AG04450 (cell line): ENCODE measurements at regions of chr17 and their contacts with region 1.

Region 1: DNA sequence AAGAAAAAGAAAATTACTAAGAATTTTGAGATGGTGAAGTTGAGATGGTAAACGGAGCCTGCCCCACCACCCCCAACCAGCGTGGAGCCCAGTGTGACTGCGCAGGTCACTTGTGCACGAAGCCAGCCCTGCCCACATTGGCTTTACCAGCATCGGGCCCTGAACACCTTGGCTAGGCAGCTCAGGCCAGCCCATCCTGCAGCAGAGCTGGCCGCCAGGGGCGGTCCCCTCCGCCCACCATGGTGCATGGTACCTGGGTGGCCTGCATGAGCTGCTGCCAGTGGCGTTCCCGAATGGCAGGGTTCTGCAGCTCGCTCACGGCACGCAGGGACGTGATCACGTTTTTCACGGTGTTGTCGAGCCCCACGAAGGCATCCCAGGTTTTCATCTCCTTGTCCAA is 62.7 kb downstream of the DNAH17 start:
- DNase-seq: no peak
- H3K4me3 ChIP-seq: no peak overlapping the region
- H3K27ac ChIP-seq: no peak overlapping the region
- H3K27me3 ChIP-seq: peaks cover 3% of the 10 kb centered on the region
- CTCF ChIP-seq: no peak

Region 2: GRCh38 chr17:78903101-78903779 is 388.7 kb after region 1 on chr17 and contains the start of gene CEP295NL:
- CTCF ChIA-PET with region 1: no interaction called
- POLR2A ChIA-PET with region 1: interaction called, 14 read pairs
- DNase-seq: no peak
- H3K4me3 ChIP-seq: no peak within 1 kb of the TSS
- H3K27ac ChIP-seq: no peak within 1 kb of the TSS
- H3K27me3 ChIP-seq: no peaks in the 10 kb centered on the region
- CTCF ChIP-seq: no peak
- polyA plus RNA-seq, gene CEP295NL: 0.11 and 0.19 TPM in 2 replicates